Brain microvascular endothelial cell (primary cell): ENCODE measurements at regions of chr1 and their contacts with region 1.

Region 1: GRCh38 chr1:229270547-229271447 is at the start of gene RAB4A:
- DNase-seq: peak; percentile 62
- H3K4me3 ChIP-seq: peak within 1 kb of the TSS; percentile 58
- H3K27ac ChIP-seq: peak within 1 kb of the TSS; percentile 64
- H3K27me3 ChIP-seq: no peaks in the 10 kb centered on the region
- CTCF ChIP-seq: no peak

Region 2: GRCh38 chr1:229452956-229453801 is 182.4 kb after region 1 on chr1:
- in situ Hi-C with region 1: loop called (anchors 25 kb)
- DNase-seq: no peak
- H3K4me3 ChIP-seq: no peak overlapping the region
- H3K27ac ChIP-seq: no peak overlapping the region
- H3K27me3 ChIP-seq: no peaks in the 10 kb centered on the region
- CTCF ChIP-seq: peak; percentile 58